ENCODE measurements at regions of chr1 and their contacts with region 1.

Region 1: GRCh38 chr1:202122639-202123335 is at the start of gene GPR37L1:
- DNase-seq: peak; percentile 44 to 69 (median 66)
- ATAC-seq: peak; percentile 52
- H3K4me3 ChIP-seq: no peak within 1 kb of the TSS
- H3K27ac ChIP-seq: no peak within 1 kb of the TSS
- H3K4me1 ChIP-seq: peaks cover 11% of the 10 kb centered on the region
- H3K27me3 ChIP-seq: no peaks in the 10 kb centered on the region
- CTCF ChIP-seq: peak; percentile 8 to 48 (median 36)
- POLR2A ChIP-seq: no peak
- total RNA-seq, gene GPR37L1: not detected

Region 2: DNA sequence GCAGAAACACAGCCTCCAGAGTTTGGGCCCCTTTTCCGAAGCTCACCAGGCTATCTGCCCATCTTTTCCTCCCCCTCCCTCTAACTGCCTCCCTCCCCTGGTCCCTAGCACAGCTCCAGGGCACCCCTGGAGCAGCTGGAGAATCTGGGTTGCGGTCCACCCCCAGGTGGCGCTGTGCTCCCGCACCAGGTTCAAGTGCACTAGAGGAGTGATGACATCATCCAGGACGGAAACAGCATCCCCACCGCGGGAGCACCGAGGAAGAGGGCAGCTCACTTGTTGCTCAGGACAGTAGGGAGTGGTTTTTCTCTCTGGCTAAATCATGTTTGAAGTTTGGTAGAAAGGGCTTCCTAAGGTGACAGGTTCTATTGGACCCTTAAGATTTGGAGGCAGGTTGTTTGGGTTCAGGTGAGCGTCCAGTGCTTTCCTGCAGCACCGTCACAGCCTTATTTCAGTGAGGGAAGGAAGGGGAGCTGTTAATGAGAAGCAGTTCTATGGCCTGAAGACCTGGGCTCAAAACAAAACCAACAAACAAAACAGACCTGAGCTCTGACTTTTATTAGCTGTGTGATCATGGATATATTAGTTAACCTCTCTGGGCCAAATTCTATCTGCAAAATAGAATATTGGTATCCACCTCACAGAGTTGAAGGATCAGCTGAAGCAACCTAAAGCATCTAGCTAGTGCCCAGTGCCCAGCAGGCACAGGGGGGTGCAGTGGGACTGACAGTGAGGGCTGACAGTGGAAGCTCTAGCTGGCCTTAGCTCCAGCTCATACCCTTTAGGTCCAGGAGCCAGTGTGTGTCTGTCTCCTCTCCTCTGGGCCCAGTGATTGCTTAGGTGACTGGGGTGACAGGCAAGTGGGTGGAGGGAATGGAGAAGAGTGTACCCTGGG is 226.6 kb before region 1 on chr1:
- intact Hi-C with region 1: loop called (anchors 10 kb)
- DNase-seq: peak; percentile 87 to 90 (median 88)
- ATAC-seq: peak; percentile 94
- H3K4me3 ChIP-seq: no peak overlapping the region
- H3K27ac ChIP-seq: no peak overlapping the region
- H3K4me1 ChIP-seq: no peaks in the 10 kb centered on the region
- H3K27me3 ChIP-seq: no peaks in the 10 kb centered on the region
- CTCF ChIP-seq: peak; percentile 90 to 94 (median 90)
- POLR2A ChIP-seq: no peak

Region 3: GRCh38 chr1:201999625-202000238 is 123.1 kb before region 1 on chr1:
- intact Hi-C with region 1: loop called (anchors 5 kb)
- DNase-seq: peak; percentile 58 to 73 (median 65)
- ATAC-seq: peak; percentile 87
- H3K4me3 ChIP-seq: no peak overlapping the region
- H3K27ac ChIP-seq: no peak overlapping the region
- H3K4me1 ChIP-seq: no peaks in the 10 kb centered on the region
- H3K27me3 ChIP-seq: no peaks in the 10 kb centered on the region
- CTCF ChIP-seq: peak; percentile 56 to 89 (median 77)
- POLR2A ChIP-seq: no peak